ENCODE measurements at regions of chr2 and their contacts with region 1.

Region 1: DNA sequence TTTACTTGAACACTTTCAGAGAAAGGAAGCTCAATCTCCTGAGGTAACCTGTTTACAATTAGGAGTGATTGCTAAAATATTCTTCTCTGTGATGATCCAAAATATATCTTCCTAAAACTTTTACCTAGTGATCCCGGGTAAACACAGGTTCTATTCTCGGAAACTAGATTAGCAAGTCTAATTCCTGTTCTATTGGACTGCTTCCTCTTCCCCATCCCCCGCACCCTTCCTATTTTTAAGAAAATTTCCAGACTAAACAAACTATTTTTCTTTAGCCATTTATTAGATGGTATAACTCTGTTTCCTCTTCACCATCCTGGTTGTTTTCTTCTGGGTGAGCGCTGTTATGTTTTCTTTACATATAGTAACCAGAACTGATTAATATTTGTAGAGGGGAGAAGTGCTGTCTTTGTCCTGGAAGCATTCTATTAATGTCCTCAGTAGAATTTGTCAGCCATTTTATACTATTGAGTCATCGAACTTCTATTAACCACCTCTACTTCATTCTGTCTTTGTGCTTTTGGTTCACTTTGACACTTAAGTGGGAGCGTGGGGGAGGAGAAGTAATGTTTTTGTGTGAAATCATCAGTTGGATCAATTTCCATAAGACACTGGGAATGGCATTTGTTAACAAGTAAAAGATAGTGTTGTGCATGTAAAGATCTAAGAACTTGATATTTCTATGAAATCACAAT is 31.8 kb downstream of the CREB1 start:
- DNase-seq: no peak
- H3K4me3 ChIP-seq: no peak overlapping the region
- H3K27me3 ChIP-seq: no peaks in the 10 kb centered on the region
- CTCF ChIP-seq: no peak

Region 2: GRCh38 chr2:207394812-207395534 is 166.6 kb before region 1 on chr2:
- CTCF ChIA-PET with region 1: no interaction called
- POLR2A ChIA-PET with region 1: no interaction called
- DNase-seq: peak; percentile 93
- H3K4me3 ChIP-seq: no peak overlapping the region
- H3K27me3 ChIP-seq: no peaks in the 10 kb centered on the region
- CTCF ChIP-seq: no peak

Region 3: DNA sequence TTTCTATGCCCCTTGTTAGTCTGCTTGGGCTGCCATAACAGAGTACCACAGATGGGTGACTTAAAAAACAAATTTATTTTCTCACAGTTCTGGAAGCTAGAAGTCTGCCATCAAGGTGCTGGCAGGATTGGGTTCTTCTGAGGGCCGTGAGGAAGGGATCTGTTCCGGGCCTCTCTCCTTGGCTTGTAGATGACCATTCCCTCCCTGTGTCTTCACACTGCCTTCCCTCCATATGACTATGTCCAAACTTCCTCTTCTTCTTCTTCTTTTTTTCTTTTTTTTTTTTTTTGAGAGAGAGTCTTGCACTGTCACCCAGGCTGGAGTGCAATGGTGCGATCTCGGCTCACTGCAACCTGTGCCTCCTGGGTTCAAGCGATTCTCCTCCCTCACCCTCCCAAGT is 136.8 kb after region 1 on chr2:
- CTCF ChIA-PET with region 1: no interaction called
- POLR2A ChIA-PET with region 1: no interaction called
- DNase-seq: no peak
- H3K4me3 ChIP-seq: no peak overlapping the region
- H3K27me3 ChIP-seq: peaks cover 2% of the 10 kb centered on the region
- CTCF ChIP-seq: no peak

Region 4: DNA sequence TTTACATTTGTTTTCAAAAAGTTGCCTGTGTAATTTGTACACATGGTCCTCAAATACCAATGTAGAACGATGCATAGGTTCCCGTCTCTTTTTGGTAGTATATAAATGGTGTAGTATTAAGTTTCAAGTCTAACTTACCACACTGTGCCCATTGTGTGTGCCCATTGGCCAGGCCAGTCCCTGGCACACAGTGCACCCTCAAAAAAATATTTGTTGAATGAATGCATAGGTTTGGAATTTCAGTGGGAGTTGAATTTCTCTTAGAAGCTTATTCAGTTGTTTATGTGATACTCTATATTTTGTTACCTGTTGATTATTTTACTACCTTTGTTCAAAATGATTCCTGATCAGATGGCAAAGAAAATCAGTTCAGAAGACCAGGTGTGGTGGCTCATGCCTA is 663.3 kb after region 1 on chr2:
- CTCF ChIA-PET with region 1: no interaction called
- POLR2A ChIA-PET with region 1: interaction called, 12 read pairs
- DNase-seq: no peak
- H3K4me3 ChIP-seq: no peak overlapping the region
- H3K27me3 ChIP-seq: no peaks in the 10 kb centered on the region
- CTCF ChIP-seq: no peak

Measured in BJ (cell line).